ENCODE measurements at regions of chr14 and their contacts with region 1.

Region 1: GRCh38 chr14:52918486-52918885 is 32.4 kb downstream of the FERMT2 start:
- DNase-seq: peak; percentile 95
- H3K4me3 ChIP-seq: no peak overlapping the region
- H3K27ac ChIP-seq: peak overlapping the region; percentile 91
- H3K4me1 ChIP-seq: peaks cover 42% of the 10 kb centered on the region
- H3K27me3 ChIP-seq: no peaks in the 10 kb centered on the region
- CTCF ChIP-seq: no peak
- POLR2A ChIP-seq: no peak

Region 2: DNA sequence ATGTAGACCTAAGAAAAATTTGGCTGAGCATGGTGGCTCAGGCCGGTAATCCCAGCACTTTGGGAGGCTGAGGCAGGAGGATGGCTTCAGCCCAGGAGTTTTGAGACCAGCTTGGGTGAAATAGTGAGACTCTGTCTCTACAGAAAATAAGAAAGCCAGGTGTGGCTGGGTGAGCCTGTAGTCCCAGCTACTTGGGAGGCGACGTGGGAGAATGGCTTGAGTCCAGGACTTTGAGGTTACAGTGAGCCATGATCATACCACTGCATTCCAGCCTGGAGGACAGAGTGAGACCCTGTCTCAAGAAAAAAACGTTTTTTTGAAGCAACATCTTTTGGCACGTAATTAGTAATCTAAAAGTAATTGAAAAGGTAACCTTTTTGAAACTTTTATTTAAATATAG is 38.5 kb before region 1 on chr14:
- CTCF ChIA-PET with region 1: no interaction called
- POLR2A ChIA-PET with region 1: no interaction called
- dilution Hi-C with region 1: no loop called
- intact Hi-C with region 1: loop called (anchors 5 kb)
- DNase-seq: no peak
- H3K4me3 ChIP-seq: no peak overlapping the region
- H3K27ac ChIP-seq: no peak overlapping the region
- H3K4me1 ChIP-seq: no peaks in the 10 kb centered on the region
- H3K27me3 ChIP-seq: no peaks in the 10 kb centered on the region
- CTCF ChIP-seq: no peak
- POLR2A ChIP-seq: no peak

Region 3: DNA sequence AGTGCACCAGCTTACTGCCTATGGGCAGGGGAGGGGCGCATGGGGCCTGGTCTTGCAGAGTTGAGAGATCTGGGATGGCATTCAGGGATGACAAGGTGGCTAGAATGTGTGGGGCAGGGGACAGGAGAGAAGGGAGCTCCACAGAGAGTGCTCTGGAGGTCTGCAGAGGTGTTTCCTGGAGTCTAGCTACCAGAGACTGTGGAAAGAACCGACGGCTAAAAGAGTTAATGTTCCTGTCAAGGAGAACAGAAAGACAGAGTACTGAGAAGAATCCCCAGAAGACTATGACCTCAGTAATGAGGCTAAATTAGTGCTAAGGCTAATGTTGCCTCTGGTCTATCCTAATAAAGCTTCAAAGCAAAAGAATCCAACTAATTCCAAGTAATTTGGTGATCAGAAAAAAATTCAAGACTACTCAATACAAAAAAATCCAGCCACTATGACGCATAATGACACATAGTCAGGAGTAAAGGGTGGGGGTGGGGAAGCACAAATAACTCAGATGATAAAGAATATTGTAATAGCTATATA is 12.3 kb before region 1 on chr14:
- CTCF ChIA-PET with region 1: interaction called, 11 read pairs
- POLR2A ChIA-PET with region 1: no interaction called
- dilution Hi-C with region 1: no loop called
- intact Hi-C with region 1: loop called (anchors 1 kb)
- DNase-seq: peak; percentile 75
- H3K4me3 ChIP-seq: no peak overlapping the region
- H3K27ac ChIP-seq: peak overlapping the region; percentile 77
- H3K4me1 ChIP-seq: peaks cover 48% of the 10 kb centered on the region
- H3K27me3 ChIP-seq: no peaks in the 10 kb centered on the region
- CTCF ChIP-seq: no peak
- POLR2A ChIP-seq: no peak

Region 4: DNA sequence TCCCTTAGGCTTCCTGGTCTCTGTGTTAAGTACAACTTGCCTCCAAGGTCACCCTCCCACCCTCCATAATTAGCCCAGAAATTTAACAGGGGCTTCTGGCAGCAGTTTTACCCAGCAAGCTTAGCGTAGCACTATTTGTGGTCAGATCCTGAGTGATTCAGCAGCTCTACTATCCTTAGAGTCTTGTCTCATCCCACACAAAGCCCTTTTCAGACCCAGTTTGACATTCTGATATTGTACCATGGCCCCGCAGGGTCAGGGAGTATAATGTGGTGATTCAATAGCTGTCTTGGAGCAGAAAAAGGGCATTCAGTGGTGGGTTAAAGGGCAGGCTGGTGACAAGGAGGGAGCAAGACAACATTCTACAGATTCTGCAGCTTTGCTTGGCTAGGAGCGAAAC is 388.4 kb after region 1 on chr14:
- CTCF ChIA-PET with region 1: no interaction called
- POLR2A ChIA-PET with region 1: no interaction called
- dilution Hi-C with region 1: no loop called
- intact Hi-C with region 1: no loop called
- DNase-seq: no peak
- H3K4me3 ChIP-seq: no peak overlapping the region
- H3K27ac ChIP-seq: no peak overlapping the region
- H3K4me1 ChIP-seq: no peaks in the 10 kb centered on the region
- H3K27me3 ChIP-seq: peaks cover 0 to 13% of the 10 kb centered on the region in 2 experiments
- CTCF ChIP-seq: no peak
- POLR2A ChIP-seq: no peak

Measured in endothelial cell of umbilical vein (primary cell).